Gastrocnemius medialis (tissue), 4 donors: ENCODE measurements at regions of chr19 and their contacts with region 1.

Region 1: GRCh38 chr19:10870955-10871603 is at the start of gene CARM1:
- DNase-seq: peak; percentile 96 to 99
- ATAC-seq: peak; percentile 80 to 81
- H3K4me3 ChIP-seq: peak within 1 kb of the TSS; percentile 66 to 86 (median 78)
- H3K27ac ChIP-seq: peak within 1 kb of the TSS; percentile 89 to 98 (median 94)
- H3K4me1 ChIP-seq: peaks cover 19 to 23% of the 10 kb centered on the region in 2 donors
- H3K27me3 ChIP-seq: no peaks in the 10 kb centered on the region
- CTCF ChIP-seq: peak in 4 of 5 experiments; percentile 84 to 95 (median 94)
- POLR2A ChIP-seq: no peak
- total RNA-seq, gene CARM1: 31.2 to 58.5 (median 53.0) TPM

Region 2: GRCh38 chr19:10717356-10718204 is 153.5 kb before region 1 on chr19 and contains the start of gene DNM2:
- in situ Hi-C with region 1: loop called in 1 of 4 experiments (anchors 5 kb)
- intact Hi-C with region 1: no loop called
- DNase-seq: peak; percentile 100
- ATAC-seq: peak; percentile 94 to 97
- H3K4me3 ChIP-seq: peak within 1 kb of the TSS; percentile 71 to 98 (median 82)
- H3K27ac ChIP-seq: peak within 1 kb of the TSS; percentile 82 to 99 (median 94)
- H3K4me1 ChIP-seq: peaks cover 25 to 27% of the 10 kb centered on the region in 2 donors
- H3K27me3 ChIP-seq: no peaks in the 10 kb centered on the region
- CTCF ChIP-seq: peak; percentile 77 to 90 (median 83)
- POLR2A ChIP-seq: peak; percentile 82 to 89
- total RNA-seq, gene DNM2: 76.2 to 131 (median 108) TPM

Region 3: GRCh38 chr19:10797541-10798256 is 73.4 kb before region 1 on chr19:
- in situ Hi-C with region 1: no loop called
- intact Hi-C with region 1: no loop called
- DNase-seq: no peak
- ATAC-seq: no peak
- H3K4me3 ChIP-seq: no peak overlapping the region
- H3K27ac ChIP-seq: no peak overlapping the region
- H3K4me1 ChIP-seq: no peaks in the 10 kb centered on the region
- H3K27me3 ChIP-seq: no peaks in the 10 kb centered on the region
- CTCF ChIP-seq: no peak
- POLR2A ChIP-seq: no peak

Region 4: DNA sequence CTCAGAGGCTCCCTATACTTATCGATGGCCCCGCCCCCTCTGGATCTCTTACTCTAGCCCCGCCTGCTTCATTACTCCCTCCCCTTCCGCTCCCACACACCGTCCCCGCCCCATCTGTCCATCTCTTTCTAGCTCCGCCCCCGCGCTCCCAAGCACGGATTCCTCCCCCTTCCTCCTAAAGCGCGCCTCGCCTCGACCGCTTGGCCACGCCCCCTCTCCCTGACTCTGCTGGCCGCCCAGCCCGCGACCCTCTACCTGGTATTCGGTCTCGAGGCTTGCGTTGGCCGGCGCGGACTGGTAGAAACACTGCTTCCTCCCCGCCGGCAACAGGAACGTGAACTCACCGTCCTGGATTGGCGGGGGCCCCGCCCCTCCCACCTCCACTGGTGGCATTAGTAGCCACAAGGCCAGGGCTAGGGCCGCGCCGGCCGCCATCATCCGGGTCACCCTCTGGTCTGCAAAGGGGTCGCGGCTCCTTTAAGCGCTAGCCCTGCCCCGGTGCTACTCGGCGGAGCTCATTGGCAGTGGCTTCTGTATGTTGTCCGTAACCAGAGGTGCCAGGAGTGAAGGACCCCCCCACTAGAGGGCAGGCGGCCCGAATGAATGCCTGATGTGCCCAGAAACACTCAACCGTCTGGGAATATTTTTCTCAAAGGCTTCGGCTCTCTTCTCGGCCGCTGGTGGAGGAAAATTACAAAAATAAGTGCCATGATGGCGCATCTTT is 35.2 kb before region 1 on chr19 and contains the start of gene TMED1:
- in situ Hi-C with region 1: no loop called
- intact Hi-C with region 1: loop called (anchors 2 kb)
- DNase-seq: peak; percentile 97 to 100
- ATAC-seq: peak; percentile 85 to 89
- H3K4me3 ChIP-seq: peak within 1 kb of the TSS; percentile 73 to 87 (median 80)
- H3K27ac ChIP-seq: peak within 1 kb of the TSS; percentile 95 to 100 (median 98)
- H3K4me1 ChIP-seq: peaks cover 6 to 10% of the 10 kb centered on the region in 2 donors
- H3K27me3 ChIP-seq: no peaks in the 10 kb centered on the region
- CTCF ChIP-seq: peak in 4 of 5 experiments; percentile 23 to 77 (median 54)
- POLR2A ChIP-seq: peak; percentile 50 to 57
- total RNA-seq, gene TMED1: 33.0 to 90.0 (median 57.1) TPM

Region 5: GRCh38 chr19:10899151-10899653 is 28.1 kb after region 1 on chr19:
- in situ Hi-C with region 1: no loop called
- intact Hi-C with region 1: no loop called
- DNase-seq: peak; percentile 68 to 92
- ATAC-seq: peak; percentile 50 to 74
- H3K4me3 ChIP-seq: no peak overlapping the region
- H3K27ac ChIP-seq: peak overlapping the region; percentile 84 to 95 (median 90)
- H3K4me1 ChIP-seq: peaks cover 71 to 74% of the 10 kb centered on the region in 2 donors
- H3K27me3 ChIP-seq: no peaks in the 10 kb centered on the region
- CTCF ChIP-seq: no peak
- POLR2A ChIP-seq: no peak

Region 6: DNA sequence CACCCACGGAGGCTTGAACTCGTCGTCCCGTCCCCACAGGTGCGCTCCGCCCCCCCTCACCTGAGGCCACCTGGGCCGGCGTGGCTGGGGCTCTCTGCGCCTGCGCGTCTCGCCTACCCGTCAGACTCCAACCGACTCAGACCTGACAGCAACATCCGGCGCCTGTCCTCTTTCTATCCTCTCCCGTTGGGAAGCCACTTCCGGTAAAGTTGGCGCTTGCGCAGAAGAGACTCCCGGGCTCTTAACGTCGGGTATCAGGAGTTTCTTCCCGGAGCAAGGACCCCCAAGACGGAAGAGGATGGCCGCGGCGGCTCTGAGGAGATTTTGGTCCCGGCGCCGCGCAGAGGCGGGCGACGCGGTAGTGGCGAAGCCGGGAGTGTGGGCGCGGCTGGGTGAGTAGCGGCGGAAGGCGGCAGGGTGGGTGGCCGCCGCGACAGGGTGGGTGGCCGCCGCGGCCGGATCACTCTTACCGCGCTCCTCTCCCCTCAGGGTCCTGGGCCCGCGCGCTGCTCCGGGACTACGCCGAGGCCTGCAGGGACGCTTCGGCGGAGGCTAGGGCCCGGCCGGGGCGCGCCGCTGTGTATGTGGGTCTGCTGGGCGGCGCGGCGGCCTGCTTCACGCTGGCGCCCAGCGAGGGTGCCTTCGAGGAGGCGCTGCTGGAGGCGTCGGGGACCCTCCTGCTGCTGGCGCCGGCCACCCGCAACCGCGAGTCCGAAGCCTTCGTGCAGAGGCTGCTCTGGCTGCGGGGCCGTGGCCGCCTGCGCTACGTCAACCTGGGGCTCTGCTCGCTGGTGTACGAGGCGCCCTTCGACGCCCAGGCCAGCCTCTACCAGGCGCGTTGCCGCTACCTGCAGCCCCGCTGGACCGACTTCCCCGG is 57.7 kb after region 1 on chr19 and contains the starts of genes TIMM29 and YIPF2:
- in situ Hi-C with region 1: loop called in 3 of 4 experiments (anchors 5 to 10 kb)
- intact Hi-C with region 1: loop called (anchors 1 kb)
- DNase-seq: peak; percentile 98 to 99
- ATAC-seq: peak; percentile 98 to 100
- H3K4me3 ChIP-seq: peak within 1 kb of the TSS; percentile 86 to 96 (median 88)
- H3K27ac ChIP-seq: peak within 1 kb of the TSS; percentile 82 to 92 (median 90)
- H3K4me1 ChIP-seq: peaks cover 17 to 31% of the 10 kb centered on the region in 2 donors
- H3K27me3 ChIP-seq: no peaks in the 10 kb centered on the region
- CTCF ChIP-seq: no peak
- POLR2A ChIP-seq: peak; percentile 66 to 77
- total RNA-seq, gene TIMM29: 28.7 to 54.5 (median 34.8) TPM
- total RNA-seq, gene YIPF2: 17.8 to 30.8 (median 24.2) TPM